AG04449 (cell line): ENCODE measurements at regions of chr14 and their contacts with region 1.

Region 1: DNA sequence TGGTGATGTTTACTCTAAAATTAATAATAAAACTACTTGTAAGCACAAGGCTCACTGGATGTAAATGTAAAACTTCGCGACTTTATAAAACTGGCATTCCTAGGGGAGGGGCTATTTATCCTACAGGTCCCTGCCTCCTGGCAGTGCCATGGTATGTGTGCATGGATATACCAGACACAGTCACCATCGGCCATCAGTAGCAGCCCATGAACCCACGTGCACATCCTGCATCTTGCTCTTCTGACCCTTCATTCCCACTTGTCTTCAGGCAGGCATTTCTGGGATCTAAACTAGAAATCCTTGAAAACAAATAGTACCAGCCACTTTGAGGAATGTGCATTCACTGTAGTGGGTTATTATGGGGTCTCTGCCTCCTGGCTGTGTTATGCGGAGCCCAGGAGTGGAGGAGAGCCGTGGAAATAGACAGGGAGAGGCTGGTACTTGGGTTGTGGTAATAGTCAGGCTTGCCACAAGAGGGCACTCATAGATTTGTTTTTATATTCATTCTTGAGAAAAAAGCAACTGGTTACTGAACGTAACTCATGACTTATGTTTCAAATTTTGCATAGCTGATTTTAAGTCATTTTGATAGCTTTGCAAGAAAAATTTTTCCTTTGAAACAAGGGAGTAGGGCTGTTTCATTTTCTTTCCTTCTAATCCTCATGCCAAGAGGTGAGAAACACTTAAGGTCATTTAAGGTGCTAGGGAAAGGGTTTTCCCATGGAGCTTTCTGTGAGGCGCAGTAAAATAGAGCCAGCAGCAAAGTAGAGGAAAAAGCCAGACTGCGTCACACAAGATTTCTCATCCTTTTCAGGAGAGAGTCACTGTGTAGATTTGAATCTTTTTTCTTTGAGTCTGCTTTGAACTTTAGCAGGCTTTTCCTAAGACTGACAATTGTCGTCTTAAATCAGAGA is 17.4 kb upstream of the GALNT16 start:
- DNase-seq: peak; percentile 14
- H3K4me3 ChIP-seq: no peak overlapping the region
- CTCF ChIP-seq: peak; percentile 45

Region 2: DNA sequence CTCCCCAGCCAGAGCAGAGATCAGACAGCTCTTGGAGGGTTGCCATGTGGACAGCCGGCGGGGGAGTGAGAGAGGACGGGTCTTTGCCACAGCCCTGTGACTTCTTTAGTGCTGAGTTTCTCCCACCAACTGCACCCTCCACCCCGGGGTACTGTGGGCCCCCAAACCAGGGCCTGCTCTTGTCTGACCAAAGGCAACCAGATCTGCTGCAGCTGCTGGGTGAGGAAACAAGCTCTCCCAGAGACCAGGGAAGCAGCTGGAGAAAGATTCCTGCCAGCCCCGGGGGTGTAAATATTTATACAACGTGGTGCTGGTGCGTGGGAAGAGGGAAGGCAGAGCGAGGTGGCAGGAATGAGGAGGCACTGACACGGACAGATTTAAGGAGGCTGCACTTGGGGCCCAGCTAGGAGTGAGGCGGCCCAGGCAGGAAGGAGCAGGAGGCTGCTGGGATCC is 435.4 kb before region 1 on chr14:
- CTCF ChIA-PET with region 1: no interaction called
- POLR2A ChIA-PET with region 1: no interaction called
- DNase-seq: no peak
- H3K4me3 ChIP-seq: no peak overlapping the region
- CTCF ChIP-seq: no peak

Region 3: DNA sequence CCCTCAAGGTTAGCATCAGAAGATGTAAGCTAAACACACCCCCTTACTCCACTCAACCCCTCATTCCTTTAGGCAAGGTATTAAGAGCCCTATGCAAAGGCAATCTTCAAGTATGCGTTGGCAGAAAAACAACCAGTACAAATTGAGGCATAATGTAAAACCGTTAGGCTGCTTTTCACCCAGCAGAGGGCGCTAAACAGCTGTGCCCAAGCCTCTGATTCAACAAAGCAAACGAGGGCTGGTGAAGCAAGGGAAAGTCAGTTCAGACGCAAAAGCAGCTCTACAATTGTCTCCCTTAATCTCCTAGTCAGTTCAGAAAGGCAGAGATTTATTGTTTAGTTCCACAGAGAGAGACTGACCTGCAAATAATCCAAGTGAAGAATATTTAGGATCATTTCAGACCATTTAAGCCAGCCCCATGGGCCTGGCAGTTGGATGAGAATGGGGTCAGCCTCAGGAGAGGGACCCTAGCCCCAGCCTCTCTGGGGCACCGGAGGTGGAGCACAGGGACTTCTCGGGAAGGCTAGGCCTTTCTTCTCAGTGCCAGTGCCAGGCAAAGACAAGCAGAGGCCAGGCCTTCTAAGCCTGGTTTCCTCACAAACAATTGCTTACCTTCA is 113.2 kb before region 1 on chr14:
- CTCF ChIA-PET with region 1: interaction called, 29 read pairs
- POLR2A ChIA-PET with region 1: no interaction called
- DNase-seq: peak; percentile 55
- H3K4me3 ChIP-seq: no peak overlapping the region
- CTCF ChIP-seq: peak; percentile 83

Region 4: DNA sequence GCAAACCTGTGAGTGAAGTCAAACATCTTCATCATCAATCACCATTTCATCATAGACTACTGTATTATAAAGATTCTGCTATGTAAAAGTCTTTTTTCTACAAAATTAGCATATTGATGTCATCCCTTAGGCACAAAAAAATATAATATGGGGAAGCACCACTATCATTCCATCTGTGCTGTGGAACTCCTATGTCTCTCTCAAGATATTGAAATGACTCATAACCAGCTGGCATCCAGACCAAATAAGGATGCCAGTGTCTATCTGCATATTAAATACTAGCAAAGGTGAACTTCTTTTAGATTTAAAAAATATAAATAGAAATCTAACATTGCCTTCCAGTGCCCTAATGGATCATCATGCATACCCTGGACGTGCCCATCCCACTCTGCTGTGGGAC is 71.7 kb before region 1 on chr14:
- CTCF ChIA-PET with region 1: no interaction called
- POLR2A ChIA-PET with region 1: no interaction called
- DNase-seq: no peak
- H3K4me3 ChIP-seq: no peak overlapping the region
- CTCF ChIP-seq: no peak

Region 5: DNA sequence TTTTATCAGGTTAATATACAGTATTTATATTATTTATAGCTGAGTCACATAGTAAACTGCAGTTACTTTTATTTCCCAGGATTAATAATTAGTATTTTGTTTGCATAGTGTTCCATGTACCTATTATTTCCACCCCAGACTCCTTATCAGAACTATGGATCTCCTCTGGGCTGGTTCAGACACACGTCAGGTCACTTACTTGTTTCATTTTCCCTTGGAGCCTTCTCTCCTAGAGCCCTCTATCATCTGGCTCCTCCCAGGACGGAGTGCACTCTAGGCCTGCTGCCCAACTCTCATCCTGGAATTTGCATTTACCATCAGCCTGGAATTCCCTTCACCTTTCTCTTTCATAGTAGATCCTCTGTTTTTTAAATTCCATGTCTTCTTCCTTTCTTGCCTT is 11.1 kb before region 1 on chr14:
- CTCF ChIA-PET with region 1: interaction called, 34 read pairs
- POLR2A ChIA-PET with region 1: no interaction called
- DNase-seq: no peak
- H3K4me3 ChIP-seq: no peak overlapping the region
- CTCF ChIP-seq: no peak

Region 6: GRCh38 chr14:69346710-69347109 is 104.1 kb after region 1 on chr14:
- CTCF ChIA-PET with region 1: interaction called, 86 read pairs
- POLR2A ChIA-PET with region 1: no interaction called
- DNase-seq: no peak
- H3K4me3 ChIP-seq: no peak overlapping the region
- CTCF ChIP-seq: peak; percentile 93

Region 7: DNA sequence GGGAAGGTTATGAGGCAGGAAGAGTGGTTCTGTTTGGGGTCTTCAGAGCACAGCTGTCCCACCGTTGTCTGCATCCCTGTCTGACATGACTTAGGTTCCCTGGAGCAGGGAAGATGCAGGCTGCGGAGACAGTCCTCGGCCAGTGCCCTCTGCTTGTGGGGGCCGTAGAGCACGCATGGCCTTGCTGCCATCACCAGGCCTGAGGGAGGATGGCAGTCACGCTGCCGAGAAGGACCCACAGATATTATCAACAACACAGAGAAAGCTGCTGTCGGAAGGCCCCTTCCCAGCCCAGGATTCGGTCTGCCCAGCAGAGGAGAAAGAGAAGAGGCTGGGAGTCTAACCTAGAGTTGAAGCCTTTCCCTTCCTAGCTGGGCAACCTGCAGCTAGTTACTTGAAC is 120.5 kb after region 1 on chr14:
- CTCF ChIA-PET with region 1: interaction called, 156 read pairs
- POLR2A ChIA-PET with region 1: no interaction called
- DNase-seq: no peak
- H3K4me3 ChIP-seq: no peak overlapping the region
- CTCF ChIP-seq: peak; percentile 84

Region 8: GRCh38 chr14:69398053-69398817 is 155.7 kb after region 1 on chr14 and contains the starts of genes ERH and SLC39A9:
- CTCF ChIA-PET with region 1: interaction called, 24 read pairs
- POLR2A ChIA-PET with region 1: interaction called, 4 read pairs
- DNase-seq: peak; percentile 83
- H3K4me3 ChIP-seq: peak within 1 kb of the TSS; percentile 90
- CTCF ChIP-seq: no peak

Region 9: GRCh38 chr14:69475194-69475818 is 232.7 kb after region 1 on chr14:
- CTCF ChIA-PET with region 1: interaction called, 15 read pairs
- POLR2A ChIA-PET with region 1: no interaction called
- DNase-seq: no peak
- H3K4me3 ChIP-seq: no peak overlapping the region
- CTCF ChIP-seq: no peak